ENCODE measurements at regions of chr9 and their contacts with region 1.

Region 1: DNA sequence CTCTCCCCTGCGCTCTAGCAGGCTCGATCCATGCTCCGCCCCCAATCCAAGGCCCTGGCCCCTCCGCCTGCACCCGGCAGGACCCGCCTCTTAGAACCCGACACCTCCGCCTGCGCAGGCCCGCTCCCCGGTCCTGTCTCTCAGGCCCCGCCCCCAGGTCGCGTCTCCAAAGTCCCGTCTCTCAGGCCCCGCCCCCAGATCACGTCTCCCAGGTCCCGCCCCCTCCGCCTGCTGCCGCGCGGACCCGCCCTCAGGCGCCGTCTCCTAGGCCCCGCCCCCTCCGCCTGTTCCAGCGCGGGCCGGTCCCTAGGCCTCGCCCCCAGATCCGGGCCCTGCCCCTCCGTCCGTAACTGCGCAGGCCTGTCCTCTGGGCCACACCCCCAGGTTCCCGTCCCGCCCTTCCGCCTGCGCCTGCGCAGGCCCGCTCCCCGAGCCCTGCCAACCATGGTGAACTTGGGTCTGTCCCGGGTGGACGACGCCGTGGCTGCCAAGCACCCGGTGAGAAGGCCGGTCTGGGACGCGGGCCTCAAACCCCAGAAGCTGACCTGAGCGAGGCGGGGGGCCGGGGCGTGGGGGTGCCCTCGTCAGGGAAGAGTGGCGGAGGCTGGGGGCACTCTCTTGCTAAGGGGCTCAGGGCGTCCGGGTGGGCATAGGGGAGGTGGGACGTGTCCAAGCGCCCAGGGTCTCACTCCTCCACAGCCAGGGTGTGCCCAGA is at the start of gene TMEM141:
- DNase-seq: peak; percentile 100
- total RNA-seq, gene TMEM141: 28.1 to 33.9 TPM

Region 2: DNA sequence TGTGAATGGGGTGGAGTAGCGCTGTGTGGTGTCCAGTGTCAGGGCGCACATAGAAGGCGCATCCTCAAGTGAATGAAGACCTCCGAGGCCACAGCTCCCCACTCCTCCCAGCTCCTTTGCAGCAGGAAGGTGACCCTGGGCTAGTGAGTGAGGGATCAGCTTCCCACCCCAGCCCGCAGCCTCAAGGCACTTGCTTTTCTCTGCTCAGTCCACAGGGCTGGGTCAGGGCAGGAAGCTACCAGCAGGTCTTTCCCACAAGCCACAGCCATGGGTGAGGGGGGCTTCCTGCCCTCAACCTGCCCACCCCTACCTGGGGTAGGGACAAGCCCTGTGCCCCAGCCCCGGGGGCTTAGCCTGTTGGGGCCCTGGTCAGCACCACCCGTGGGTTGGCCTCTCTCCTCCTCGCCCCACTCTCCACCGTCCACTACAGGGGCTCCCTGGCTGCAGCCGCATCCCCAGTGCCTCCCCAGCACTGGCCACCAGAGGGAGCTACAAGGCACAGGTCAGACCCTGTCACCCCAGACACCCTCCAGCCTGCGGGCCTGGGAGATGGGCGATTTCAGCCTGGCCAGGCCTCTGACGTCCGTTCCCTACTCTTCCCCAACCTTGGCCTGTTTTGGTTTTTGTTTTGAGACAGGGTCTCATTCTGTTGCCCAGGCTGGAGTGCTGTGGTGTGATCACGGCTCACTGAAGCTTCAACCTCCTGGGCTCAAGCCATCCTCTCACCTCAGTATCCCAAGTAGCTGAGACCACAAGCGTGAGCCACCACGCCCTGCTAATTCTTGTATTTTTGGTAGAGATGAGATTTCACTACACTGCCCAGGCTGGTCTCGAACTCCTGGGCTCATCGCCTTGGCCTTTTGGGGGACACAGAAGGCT is 238.2 kb after region 1 on chr9:
- intact Hi-C with region 1: loop called (anchors 2 to 5 kb)
- DNase-seq: peak; percentile 95

Region 3: DNA sequence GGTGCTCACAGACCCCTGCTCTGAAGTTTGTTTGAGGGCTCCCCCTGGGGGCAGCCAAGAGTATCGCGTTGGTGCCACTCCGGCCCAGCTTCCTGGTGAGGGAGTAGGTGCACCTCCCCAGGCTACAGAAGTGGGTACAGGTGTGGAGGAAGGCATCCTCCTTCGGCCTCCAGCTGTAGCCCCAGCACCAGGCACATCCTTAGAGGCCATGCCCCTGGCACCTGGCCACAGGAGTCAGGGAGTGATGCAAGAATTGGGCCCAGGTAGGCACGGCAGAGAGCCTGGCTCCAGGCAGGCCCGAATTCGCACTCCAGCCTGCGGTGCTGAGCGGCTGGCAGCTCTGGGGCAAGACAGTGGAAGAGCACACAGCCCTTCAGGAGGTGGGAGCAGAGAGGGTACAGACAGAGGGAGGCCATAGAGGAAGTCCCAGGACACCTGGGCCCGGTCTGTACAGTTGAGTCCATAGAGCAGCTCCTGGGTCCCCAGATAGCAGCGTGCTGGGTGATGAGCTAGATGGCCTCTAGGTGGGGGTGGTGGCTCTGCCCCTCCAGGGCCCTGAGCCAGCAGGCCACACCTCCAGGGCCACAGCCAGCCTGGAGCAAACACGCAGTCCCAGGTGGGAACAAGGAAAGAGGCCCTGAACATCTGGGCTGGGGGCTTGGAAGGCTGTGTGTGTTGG is 276.9 kb after region 1 on chr9:
- intact Hi-C with region 1: loop called in 1 of 2 experiments (anchors 10 kb)
- DNase-seq: no peak

Region 4: DNA sequence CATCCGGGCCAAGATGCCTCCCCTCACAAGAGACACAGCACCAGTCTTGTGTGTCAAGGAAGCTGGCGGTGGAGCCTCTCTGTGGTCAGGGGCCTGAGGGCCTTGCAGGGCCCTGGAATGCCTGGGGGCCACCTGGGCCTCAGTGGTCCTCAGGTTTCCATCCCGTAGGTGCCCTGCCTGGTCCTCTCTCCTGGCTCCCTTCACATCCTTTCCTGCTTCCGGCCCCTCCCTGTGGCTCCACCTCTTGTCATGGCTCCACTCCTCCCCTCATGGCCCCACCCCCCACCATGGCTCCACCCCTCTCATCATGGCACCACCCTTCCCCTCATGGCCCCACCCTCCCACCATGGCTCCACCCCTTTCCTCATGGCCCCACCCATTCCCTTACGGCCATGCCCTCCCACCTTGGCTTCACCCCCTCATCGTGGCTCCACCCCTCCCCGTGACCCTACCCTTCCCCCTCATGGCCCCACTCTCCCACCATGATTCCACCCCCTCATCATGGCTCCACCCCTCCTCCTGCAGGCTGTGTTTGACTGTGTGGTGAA is 1262.3 kb after region 1 on chr9:
- intact Hi-C with region 1: no loop called
- DNase-seq: peak; percentile 67

Measured in posterior vena cava (tissue), 2 donors.